Activated CD4-positive, alpha-beta T cell treated with anti-CD3 and anti-CD28 coated beads, Interleukin-2, amount 10 ng/mL, durations not matched to agents 24 days and 14 days (primary cell): ENCODE measurements at regions of chr13 and their contacts with region 1.

Region 1: GRCh38 chr13:27362064-27362883 is 62.1 kb upstream of the GTF3A start:
- DNase-seq: peak; percentile 94
- H3K4me3 Mint-ChIP-seq: peak overlapping the region; percentile 53
- H3K27ac Mint-ChIP-seq: no peak overlapping the region
- H3K4me1 Mint-ChIP-seq: peaks cover 2% of the 10 kb centered on the region
- H3K27me3 Mint-ChIP-seq: peaks cover 39% of the 10 kb centered on the region

Region 2: GRCh38 chr13:26929971-26930730 is 432.1 kb before region 1 on chr13:
- intact Hi-C with region 1: no loop called
- DNase-seq: peak; percentile 90
- H3K4me3 Mint-ChIP-seq: no peak overlapping the region
- H3K27ac Mint-ChIP-seq: no peak overlapping the region
- H3K4me1 Mint-ChIP-seq: peaks cover 3% of the 10 kb centered on the region
- H3K27me3 Mint-ChIP-seq: peaks cover 7% of the 10 kb centered on the region

Region 3: DNA sequence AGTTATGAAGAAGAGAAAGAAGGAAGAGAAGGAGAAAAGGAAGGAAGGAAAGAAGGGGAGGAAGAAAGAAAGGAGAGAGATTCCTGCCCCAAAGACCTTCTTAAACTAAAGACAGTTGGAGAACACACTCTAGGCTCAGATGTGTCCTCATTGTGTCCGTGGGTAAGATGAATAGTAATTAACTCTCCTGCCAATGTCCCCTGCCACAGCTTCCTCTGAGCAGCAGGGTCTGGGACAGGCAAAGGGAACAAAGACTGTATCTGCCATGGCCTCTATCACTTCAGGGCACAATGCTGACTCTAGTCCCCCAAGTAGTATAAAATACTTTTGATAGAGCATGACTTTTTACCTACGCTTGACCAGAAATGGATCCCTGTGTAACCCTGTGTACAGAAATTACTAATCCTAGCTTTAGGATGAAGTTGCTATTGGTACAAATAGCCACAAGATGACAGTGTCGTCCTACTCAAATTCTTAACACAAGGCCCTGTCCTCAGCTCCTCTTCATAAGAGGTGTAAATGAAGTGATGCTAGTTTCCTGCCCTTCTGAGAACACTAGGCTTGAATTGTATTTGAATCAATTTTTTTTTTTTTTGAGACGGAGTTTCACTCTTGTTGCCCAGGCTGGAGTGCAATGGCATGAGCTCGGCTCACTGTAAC is 415.5 kb before region 1 on chr13:
- intact Hi-C with region 1: loop called (anchors 1 kb)
- DNase-seq: no peak
- H3K4me3 Mint-ChIP-seq: no peak overlapping the region
- H3K27ac Mint-ChIP-seq: no peak overlapping the region
- H3K4me1 Mint-ChIP-seq: no peaks in the 10 kb centered on the region
- H3K27me3 Mint-ChIP-seq: peaks cover 7% of the 10 kb centered on the region

Region 4: DNA sequence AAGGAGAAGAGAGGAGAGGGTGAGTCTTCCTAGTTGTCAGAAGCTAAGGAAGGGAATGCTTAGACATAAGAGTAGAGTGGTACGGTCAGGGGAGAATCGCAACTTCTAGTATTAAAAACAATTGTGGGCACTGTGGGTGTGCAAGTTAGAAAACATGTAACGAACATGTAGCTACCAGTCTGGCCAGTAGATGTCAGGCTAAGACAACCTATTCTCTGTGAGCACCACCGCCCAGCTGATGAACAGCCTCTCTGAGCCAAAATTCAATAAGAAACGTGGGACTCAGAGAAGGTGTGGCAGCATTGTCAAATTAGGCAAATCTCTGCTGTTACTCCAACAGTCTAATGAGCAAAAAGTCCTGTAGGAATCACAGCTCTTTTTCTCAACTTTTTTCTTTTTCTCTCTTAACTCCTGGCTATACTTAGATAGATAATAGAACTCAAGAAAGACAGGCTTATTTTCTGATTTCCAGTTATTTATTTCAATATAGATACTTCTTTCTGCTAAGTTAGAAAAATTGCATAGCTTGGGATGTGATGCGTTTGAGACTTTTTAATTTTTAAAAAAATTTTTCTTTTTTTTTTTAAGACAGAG is 376.9 kb before region 1 on chr13:
- intact Hi-C with region 1: loop called (anchors 1 kb)
- DNase-seq: peak; percentile 92
- H3K4me3 Mint-ChIP-seq: no peak overlapping the region
- H3K27ac Mint-ChIP-seq: no peak overlapping the region
- H3K4me1 Mint-ChIP-seq: peaks cover 9% of the 10 kb centered on the region
- H3K27me3 Mint-ChIP-seq: peaks cover 4% of the 10 kb centered on the region

Region 5: GRCh38 chr13:27270594-27271520 is 91.4 kb before region 1 on chr13 and contains the start of gene RASL11A:
- intact Hi-C with region 1: loop called (anchors 10 kb)
- DNase-seq: peak; percentile 93
- H3K4me3 Mint-ChIP-seq: peak within 1 kb of the TSS; percentile 90
- H3K27ac Mint-ChIP-seq: no peak within 1 kb of the TSS
- H3K4me1 Mint-ChIP-seq: peaks cover 11% of the 10 kb centered on the region
- H3K27me3 Mint-ChIP-seq: peaks cover 35% of the 10 kb centered on the region
- total RNA-seq, gene RASL11A: 1.8 and 2.8 TPM in 2 replicates

Region 6: GRCh38 chr13:27432611-27433210 is 70.4 kb after region 1 on chr13:
- intact Hi-C with region 1: no loop called
- DNase-seq: no peak
- H3K4me3 Mint-ChIP-seq: no peak overlapping the region
- H3K27ac Mint-ChIP-seq: peak overlapping the region; percentile 56
- H3K4me1 Mint-ChIP-seq: peaks cover 39% of the 10 kb centered on the region
- H3K27me3 Mint-ChIP-seq: no peaks in the 10 kb centered on the region